ENCODE measurements at regions of chr5 and their contacts with region 1.

Region 1: DNA sequence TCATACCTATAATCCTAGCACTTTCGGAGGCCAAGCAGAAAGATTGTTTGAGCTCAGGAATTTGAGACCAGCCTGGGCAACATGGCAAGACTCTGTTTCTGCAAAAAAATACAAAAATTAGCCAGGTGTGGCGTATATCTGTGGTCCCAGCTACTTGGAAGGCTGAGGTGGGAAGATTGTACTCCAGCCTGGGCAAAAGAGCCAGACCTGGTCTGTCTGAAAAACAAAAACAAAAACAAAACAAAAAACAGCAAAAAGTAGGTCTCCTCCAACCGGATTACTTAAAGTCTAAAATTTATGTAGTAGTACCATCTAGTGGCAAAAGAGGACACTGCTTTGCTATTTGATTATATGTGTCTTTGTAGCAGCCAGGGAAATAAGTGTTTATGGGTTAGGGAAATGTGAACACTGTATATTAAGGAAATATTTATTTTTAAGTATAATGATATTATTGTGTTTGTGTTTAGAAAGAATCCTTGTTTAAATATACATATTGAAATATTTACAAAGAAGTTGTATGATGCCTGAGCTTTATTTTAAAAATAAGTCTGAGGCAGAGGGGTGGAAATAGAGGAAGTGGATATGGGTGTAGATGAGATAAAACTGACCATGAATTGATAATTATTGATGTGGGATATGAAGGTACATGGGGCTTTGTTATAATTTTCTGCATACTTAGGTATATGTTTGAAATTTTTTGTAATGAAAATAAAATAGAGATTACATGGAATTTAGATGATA is 20.0 kb downstream of the APC start:
- DNase-seq: no peak
- H3K4me3 ChIP-seq: no peak overlapping the region
- H3K27ac ChIP-seq: no peak overlapping the region
- H3K27me3 ChIP-seq: no peaks in the 10 kb centered on the region
- CTCF ChIP-seq: peak; percentile 74

Region 2: DNA sequence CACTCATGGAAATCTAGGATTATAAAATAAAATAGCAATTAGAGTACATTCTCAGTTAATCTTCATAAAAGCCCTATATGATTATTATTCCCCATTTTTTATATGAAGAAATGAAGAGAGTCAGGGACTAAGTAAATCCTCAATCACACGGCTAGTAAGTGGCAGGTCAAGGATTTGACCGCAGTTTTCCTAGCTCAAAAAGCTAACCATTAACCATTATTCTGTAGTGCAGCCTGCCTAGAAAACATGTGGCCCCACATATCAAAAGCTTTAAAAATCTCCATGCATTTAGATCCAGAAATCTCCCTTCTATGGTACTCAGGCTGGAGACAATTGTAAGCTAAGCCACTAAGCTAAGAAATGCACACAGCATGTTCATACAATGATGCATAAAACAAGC is 359.9 kb before region 1 on chr5:
- CTCF ChIA-PET with region 1: no interaction called
- POLR2A ChIA-PET with region 1: no interaction called
- DNase-seq: no peak
- H3K4me3 ChIP-seq: no peak overlapping the region
- H3K27ac ChIP-seq: no peak overlapping the region
- H3K27me3 ChIP-seq: no peaks in the 10 kb centered on the region
- CTCF ChIP-seq: no peak

Region 3: DNA sequence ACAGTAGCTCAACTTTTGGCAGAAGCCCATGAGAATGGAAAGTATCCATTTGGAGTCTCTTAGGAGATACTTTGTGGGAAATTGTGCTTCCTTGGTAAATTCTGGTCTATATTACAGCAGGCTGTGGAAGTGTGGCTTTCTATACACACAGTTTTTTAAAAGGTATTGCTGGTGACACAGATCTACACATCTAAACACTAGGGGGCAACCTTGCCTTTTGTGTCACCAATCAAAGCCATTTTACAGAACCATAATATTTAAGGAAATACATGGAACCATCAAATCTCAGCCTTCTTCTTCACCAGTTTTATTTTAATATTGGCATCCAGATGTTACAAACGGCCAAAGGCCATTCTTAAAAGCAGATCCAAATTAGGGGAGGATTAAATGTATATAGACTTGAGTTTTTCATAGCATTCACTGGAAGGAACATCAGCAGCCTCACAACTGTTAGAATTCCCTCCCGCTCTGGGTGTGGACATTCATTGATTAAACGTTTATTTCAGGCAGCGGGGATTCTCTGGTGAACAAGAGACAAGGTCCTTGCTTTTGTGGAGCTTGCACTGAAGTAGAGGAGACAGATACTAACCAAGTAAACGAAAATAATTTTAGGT is 206.1 kb before region 1 on chr5:
- CTCF ChIA-PET with region 1: interaction called, 334 read pairs
- POLR2A ChIA-PET with region 1: no interaction called
- DNase-seq: peak; percentile 20
- H3K4me3 ChIP-seq: no peak overlapping the region
- H3K27ac ChIP-seq: no peak overlapping the region
- H3K27me3 ChIP-seq: peaks cover 4% of the 10 kb centered on the region
- CTCF ChIP-seq: peak; percentile 74

Region 4: DNA sequence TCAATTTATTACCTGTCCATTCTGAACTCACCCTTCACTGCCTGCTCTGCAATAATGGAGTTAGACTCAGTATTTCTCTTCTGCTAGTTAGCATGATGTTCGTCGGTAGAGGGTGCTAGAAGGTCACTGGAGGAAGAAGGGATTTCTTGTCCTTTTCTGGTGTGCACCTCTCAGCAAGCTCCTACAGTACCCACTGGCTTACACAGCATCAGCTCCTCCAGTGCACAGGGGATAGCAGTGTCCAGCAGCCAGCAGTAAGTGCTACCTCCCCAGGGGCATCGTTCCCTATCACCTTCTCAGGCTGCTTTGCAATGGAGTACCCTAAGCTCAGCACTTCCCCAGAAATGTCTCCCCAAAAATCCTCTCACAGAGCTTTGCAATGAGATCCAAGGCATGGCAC is 65.9 kb before region 1 on chr5:
- CTCF ChIA-PET with region 1: interaction called, 68 read pairs
- POLR2A ChIA-PET with region 1: no interaction called
- DNase-seq: no peak
- H3K4me3 ChIP-seq: no peak overlapping the region
- H3K27ac ChIP-seq: no peak overlapping the region
- H3K27me3 ChIP-seq: no peaks in the 10 kb centered on the region
- CTCF ChIP-seq: peak; percentile 38; the same call in 1 of the 2 replicates

Region 5: DNA sequence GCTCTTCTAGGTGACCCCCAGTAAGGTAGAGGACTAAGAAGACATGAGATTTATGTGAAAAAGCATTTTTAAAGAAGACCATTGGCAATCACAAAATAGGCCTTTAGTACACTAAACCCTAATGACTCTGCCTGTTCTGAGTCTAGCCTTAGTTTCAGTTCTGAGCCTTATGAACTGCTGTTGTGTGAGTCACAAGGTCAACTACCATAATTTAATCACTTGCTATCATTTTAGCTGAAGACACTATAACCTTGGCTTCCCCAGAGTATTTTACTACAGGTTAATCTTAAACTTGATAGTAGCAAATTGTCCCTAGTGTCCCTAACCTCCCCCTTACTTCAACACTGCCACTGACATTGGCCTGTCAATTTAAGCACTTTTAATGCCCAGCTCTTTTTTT is 14.5 kb after region 1 on chr5:
- CTCF ChIA-PET with region 1: interaction called, 26 read pairs
- POLR2A ChIA-PET with region 1: no interaction called
- DNase-seq: no peak
- H3K4me3 ChIP-seq: no peak overlapping the region
- H3K27ac ChIP-seq: no peak overlapping the region
- H3K27me3 ChIP-seq: no peaks in the 10 kb centered on the region
- CTCF ChIP-seq: no peak

Measured in AG04450 (cell line).